Dendritic cell treated with granulocyte-macrophage colony-stimulating factor and Interleukin-4, amounts not matched to agents 40 ng/mL and 50 ng/mL, for 4 days (primary cell): ENCODE measurements at regions of chr7 and their contacts with region 1.

Region 1: GRCh38 chr7:137606061-137606674 is 240.6 kb downstream of the DGKI start:
- H3K4me3 Mint-ChIP-seq: no peak overlapping the region
- H3K27ac Mint-ChIP-seq: no peak overlapping the region
- H3K4me1 Mint-ChIP-seq: no peaks in the 10 kb centered on the region
- H3K27me3 Mint-ChIP-seq: peaks cover 14% of the 10 kb centered on the region

Region 2: GRCh38 chr7:137626469-137627067 is 20.4 kb after region 1 on chr7:
- intact Hi-C with region 1: loop called (anchors 2 kb)
- H3K4me3 Mint-ChIP-seq: no peak overlapping the region
- H3K27ac Mint-ChIP-seq: no peak overlapping the region
- H3K4me1 Mint-ChIP-seq: peaks cover 5% of the 10 kb centered on the region
- H3K27me3 Mint-ChIP-seq: peaks cover 28% of the 10 kb centered on the region

Region 3: GRCh38 chr7:137975221-137975620 is 369.1 kb after region 1 on chr7:
- intact Hi-C with region 1: no loop called
- H3K4me3 Mint-ChIP-seq: no peak overlapping the region
- H3K27ac Mint-ChIP-seq: no peak overlapping the region
- H3K4me1 Mint-ChIP-seq: peaks cover 24% of the 10 kb centered on the region
- H3K27me3 Mint-ChIP-seq: no peaks in the 10 kb centered on the region